ENCODE measurements at regions of chr13 and their contacts with region 1.

Region 1: GRCh38 chr13:47774671-47774994 is 226.4 kb downstream of the SUCLA2 start:
- DNase-seq: no peak
- ATAC-seq: no peak

Region 2: GRCh38 chr13:46831588-46832194 is 942.9 kb before region 1 on chr13:
- intact Hi-C with region 1: loop called (anchors 5 kb)
- DNase-seq: no peak
- ATAC-seq: no peak

Region 3: GRCh38 chr13:46975173-46975572 is 799.5 kb before region 1 on chr13:
- intact Hi-C with region 1: loop called (anchors 10 kb)
- DNase-seq: no peak
- ATAC-seq: no peak

Region 4: GRCh38 chr13:47420568-47420967 is 354.1 kb before region 1 on chr13:
- intact Hi-C with region 1: loop called (anchors 5 kb)
- DNase-seq: no peak
- ATAC-seq: peak; percentile 14

Region 5: DNA sequence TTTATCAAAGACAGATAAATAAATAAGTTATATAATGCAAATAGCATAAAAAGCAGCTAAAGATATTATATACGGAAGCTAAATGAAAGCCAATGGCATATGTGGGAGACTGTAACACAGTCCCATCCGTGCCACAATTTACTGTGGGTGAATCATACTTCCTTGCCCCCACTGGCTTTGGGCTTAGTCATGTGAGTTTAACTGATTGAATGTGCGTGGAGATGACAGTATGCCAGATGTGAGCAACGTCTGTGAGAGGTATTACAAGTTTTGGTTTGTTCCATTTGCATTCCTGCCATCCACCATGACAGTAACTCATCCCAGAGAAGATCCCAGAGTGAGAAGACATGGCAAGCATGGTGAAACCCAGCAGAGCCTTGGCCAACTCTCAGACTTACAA is 113.6 kb before region 1 on chr13:
- intact Hi-C with region 1: no loop called
- DNase-seq: no peak
- ATAC-seq: no peak

Region 6: DNA sequence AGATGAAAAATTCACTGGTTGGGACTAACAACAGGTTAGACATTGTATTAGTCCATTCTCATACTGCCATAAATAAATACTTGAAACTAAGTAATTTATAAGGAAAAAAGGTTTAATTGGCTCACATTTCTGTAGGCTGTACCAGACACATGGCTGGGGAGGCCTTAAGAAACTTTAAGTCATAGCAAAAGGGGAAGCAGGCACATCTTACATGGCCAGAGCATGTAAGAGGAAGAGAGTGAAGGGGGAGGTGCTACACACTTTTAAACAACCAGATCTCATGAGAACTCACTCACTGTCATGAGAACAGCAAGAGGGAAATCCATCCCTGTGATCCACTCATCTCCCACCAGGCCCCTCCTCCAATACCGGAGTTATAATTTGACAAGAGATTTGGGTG is 100.6 kb after region 1 on chr13:
- intact Hi-C with region 1: no loop called
- DNase-seq: no peak
- ATAC-seq: no peak